IMR-90 (cell line): ENCODE measurements at regions of chr10 and their contacts with region 1.

Region 1: GRCh38 chr10:49300140-49300974 is 1.4 kb downstream of the C10orf71 start:
- DNase-seq: peak; percentile 17
- ATAC-seq: no peak
- H3K4me3 ChIP-seq: no peak overlapping the region
- H3K27ac ChIP-seq: no peak overlapping the region
- H3K4me1 ChIP-seq: peaks cover 2% of the 10 kb centered on the region; the same call in 1 of the 2 replicates
- H3K27me3 ChIP-seq: peaks cover 43% of the 10 kb centered on the region
- CTCF ChIP-seq: no peak
- POLR2A ChIP-seq: no peak
- RAD21 ChIP-seq: no peak

Region 2: DNA sequence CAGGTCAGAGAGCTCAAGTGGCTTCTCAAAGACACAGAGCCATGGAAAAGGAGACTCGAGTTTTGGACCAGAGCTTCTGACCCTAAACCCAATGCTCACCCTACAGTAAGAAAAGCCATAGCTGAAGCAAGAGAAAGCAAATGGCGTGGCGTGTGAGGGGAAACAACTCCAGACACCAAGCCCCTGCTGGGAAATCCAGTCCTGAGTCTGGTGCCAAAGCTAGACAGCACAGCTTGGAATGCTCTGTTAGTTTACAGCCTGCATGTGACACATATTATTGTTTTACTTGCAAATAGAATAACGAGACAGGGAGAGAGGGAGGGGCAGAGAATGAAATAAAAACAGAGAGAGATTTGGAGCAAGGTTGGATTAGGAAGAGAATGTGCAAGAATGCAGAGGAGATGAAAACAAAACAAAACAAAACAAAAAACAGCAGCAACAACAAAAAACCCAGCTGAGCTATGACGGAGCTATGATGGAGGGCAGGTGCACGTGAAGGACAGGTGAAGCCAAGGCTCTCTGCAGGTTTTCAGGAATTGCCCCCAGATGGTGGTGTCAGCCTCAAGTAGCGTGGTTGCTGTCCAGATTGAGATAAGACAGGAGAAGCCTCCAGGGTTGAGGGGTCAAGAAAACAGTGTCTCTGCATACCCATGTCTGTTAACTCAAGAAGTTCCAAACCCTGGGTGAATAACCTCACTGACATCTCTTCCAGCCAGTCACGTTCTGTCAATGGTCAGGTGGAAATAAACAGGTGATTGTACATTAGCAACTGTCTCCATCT is 291.0 kb before region 1 on chr10:
- CTCF ChIA-PET with region 1: no interaction called
- POLR2A ChIA-PET with region 1: interaction called, 13 read pairs
- dilution Hi-C with region 1: no loop called
- in situ Hi-C with region 1: no loop called
- intact Hi-C with region 1: no loop called
- DNase-seq: no peak
- ATAC-seq: peak; percentile 47
- H3K4me3 ChIP-seq: no peak overlapping the region
- H3K27ac ChIP-seq: no peak overlapping the region
- H3K4me1 ChIP-seq: peaks cover 6% of the 10 kb centered on the region; the same call in 1 of the 2 replicates
- H3K27me3 ChIP-seq: peaks cover 6% of the 10 kb centered on the region
- CTCF ChIP-seq: no peak
- POLR2A ChIP-seq: no peak
- RAD21 ChIP-seq: no peak

Region 3: DNA sequence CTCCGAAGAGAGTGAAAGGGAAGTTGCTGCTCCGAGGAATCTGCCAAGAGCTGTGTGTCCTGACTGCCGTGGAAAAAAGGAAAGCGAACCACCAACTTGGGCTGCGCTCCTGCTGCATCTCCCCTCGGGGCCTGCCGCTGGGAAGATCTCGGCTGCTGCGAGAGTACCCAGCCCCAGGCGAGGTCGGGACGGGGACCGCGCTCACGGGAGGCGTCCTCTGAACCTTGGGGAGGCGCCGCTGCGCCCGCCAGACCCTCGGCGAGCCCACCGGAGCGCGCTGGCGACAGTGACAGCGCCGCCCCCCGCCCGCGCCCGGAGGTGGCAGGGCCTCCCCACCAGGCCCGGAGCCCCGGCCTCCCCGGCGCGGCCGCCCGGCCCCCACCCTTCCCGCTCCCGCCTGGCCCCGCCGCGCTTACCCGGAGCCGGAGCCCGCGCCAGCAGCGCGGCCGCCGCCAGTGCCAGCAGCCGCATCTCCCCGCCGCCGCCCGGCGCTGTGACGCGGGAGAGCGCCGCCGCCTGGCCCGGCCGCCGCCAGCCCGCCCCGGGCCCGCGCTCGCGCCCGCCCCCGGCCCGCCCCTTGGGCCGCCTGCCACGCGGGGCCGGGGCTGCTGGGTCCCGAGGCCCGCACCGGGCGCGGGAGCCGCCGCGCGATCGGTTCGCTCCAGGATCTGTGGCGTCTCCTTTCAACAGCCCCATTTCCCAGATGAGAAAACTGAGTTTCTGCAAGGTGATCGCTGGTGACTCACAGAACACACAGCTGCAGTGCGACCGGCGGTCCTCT is 185.2 kb before region 1 on chr10 and contains the start of gene VSTM4:
- CTCF ChIA-PET with region 1: no interaction called
- POLR2A ChIA-PET with region 1: no interaction called
- dilution Hi-C with region 1: no loop called
- in situ Hi-C with region 1: no loop called
- intact Hi-C with region 1: loop called (anchors 10 kb)
- DNase-seq: peak; percentile 59
- ATAC-seq: peak; percentile 85
- H3K4me3 ChIP-seq: peak within 1 kb of the TSS; percentile 66
- H3K27ac ChIP-seq: peak within 1 kb of the TSS; percentile 86
- H3K4me1 ChIP-seq: peaks cover 17% of the 10 kb centered on the region; the same call in 1 of the 2 replicates
- H3K27me3 ChIP-seq: no peaks in the 10 kb centered on the region; the same call in 1 of the 2 replicates
- CTCF ChIP-seq: no peak
- POLR2A ChIP-seq: peak; percentile 31; the same call in 1 of the 2 replicates
- RAD21 ChIP-seq: no peak; the same call in 1 of the 2 replicates
- total RNA-seq, gene VSTM4: 2.5 and 2.9 TPM in 2 replicates